RWPE1 (cell line): ENCODE measurements at regions of chr5 and their contacts with region 1.

Region 1: DNA sequence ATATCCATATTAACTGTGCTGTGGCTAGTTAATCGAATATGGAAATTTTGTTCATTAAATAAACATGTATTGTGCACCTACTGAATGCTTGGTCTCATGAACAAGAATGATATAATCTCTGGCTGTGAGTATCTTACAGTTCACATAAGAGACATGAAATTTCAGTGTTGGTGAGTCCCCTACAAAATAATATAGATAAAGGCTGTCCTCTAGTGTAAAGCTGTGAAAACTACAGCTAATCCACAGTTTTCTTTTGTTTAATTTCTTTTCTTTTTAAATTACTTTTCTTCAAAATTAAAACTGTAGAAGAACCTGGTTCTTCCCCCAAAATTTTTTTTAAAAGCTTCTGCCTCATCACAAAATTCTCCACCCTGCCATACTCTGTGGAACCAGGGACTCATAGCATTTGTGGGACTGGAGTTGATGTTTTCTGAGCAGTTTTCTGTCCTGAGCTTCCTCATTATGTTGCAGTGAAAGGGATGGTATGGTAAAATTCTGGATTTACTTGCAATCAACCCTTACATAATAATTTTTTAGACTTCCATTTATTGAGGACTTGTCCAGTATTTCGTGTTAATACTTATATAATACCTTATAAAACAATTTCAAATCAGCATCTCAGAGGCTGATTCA is 135.0 kb downstream of the STK32A start:
- DNase-seq: peak; percentile 40
- H3K27ac ChIP-seq: no peak overlapping the region
- CTCF ChIP-seq: peak; percentile 94

Region 2: GRCh38 chr5:147223948-147224791 is 145.7 kb before region 1 on chr5:
- CTCF ChIA-PET with region 1: interaction called, 17 read pairs
- POLR2A ChIA-PET with region 1: no interaction called
- DNase-seq: peak; percentile 75
- H3K27ac ChIP-seq: no peak overlapping the region
- CTCF ChIP-seq: peak; percentile 75